ENCODE measurements at regions of chr1 and their contacts with region 1.

Region 1: GRCh38 chr1:234621657-234622335 is 11.8 kb upstream of the IRF2BP2 start:
- DNase-seq: no peak

Region 2: GRCh38 chr1:234665975-234666605 is 44.3 kb after region 1 on chr1:
- intact Hi-C with region 1: loop called (anchors 5 kb)
- DNase-seq: no peak

Region 3: DNA sequence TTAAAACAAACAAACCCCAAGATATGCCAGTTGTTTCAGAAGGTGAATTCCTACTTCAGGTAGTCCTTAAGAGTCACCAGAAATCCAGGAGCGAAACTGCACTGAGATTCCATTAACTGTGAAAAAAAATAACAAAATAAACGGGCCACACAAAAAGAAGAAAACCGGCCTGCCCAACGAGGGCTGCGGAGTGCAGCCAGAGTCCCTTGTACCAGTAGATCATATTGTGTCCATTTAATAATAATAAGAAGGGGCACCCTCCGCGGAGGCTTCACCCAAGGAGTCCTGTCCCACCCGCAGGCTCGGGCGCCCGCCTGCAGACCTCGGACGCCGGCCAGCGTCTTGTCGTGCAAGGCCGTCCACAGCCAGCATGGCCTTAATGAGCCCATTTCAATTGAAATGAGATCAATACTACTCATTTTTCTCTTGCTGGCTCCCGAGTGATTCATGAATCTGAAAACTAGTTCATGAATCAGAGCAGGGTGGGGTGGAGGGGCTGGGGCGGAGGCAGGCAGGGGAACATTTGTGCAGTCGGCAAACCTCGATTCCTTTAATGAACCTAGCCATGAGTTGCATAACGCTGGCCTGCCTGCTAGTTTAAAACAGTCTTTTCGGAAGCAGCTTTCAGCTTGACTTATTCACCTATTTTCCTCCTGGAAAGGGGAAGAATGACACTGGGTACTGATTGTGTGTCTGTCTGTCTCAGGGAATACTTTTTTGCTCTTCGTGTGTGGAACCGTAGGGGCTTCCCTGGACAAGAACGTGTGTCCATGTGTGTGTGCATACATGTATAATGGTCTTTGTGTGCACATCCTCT is 101.3 kb after region 1 on chr1:
- intact Hi-C with region 1: no loop called
- DNase-seq: peak; percentile 44 to 94 (median 76)